Thyroid gland (tissue), 4 donors: ENCODE measurements at regions of chr4 and their contacts with region 1.

Region 1: DNA sequence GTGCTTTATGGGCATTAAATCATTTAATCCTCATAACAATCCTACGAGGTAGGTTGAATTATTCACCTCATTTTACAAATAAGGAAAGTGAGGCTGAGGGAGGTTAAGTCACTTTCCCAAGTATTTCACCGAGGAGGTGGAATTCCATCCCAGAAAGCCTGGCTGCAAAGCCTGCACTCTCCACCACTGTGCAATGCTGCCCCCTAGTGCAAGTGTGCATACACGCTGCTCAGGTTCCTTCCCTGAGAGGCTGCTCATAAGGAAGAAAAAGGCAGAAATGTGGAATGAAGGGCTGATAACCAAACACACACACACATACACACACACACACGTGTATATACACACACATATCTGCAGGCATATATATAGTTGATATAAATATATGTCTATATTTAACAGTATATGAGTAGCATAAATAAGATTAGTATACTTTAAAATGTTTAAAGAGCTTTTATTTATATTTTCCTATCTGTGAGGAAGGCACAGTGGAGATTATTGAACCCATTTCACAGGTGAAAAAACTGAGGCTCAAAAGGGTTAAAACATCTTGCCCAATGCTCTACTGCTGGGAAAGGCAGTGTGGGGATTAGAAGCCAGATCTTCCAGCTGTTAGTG is 714.5 kb upstream of the TENM3 start:
- DNase-seq: peak; percentile 57 to 69
- H3K4me3 ChIP-seq: no peak overlapping the region
- H3K27ac ChIP-seq: no peak overlapping the region
- H3K4me1 ChIP-seq: no peaks in the 10 kb centered on the region
- H3K27me3 ChIP-seq: no peaks in the 10 kb centered on the region
- CTCF ChIP-seq: peak; percentile 37 to 82 (median 70)
- POLR2A ChIP-seq: no peak

Region 2: GRCh38 chr4:181143250-181143854 is 385.3 kb before region 1 on chr4:
- intact Hi-C with region 1: loop called (anchors 5 kb)
- DNase-seq: peak; percentile 75 to 84
- H3K4me3 ChIP-seq: no peak overlapping the region
- H3K27ac ChIP-seq: no peak overlapping the region
- H3K4me1 ChIP-seq: no peaks in the 10 kb centered on the region
- H3K27me3 ChIP-seq: no peaks in the 10 kb centered on the region
- CTCF ChIP-seq: peak; percentile 69 to 88 (median 76)
- POLR2A ChIP-seq: no peak

Region 3: DNA sequence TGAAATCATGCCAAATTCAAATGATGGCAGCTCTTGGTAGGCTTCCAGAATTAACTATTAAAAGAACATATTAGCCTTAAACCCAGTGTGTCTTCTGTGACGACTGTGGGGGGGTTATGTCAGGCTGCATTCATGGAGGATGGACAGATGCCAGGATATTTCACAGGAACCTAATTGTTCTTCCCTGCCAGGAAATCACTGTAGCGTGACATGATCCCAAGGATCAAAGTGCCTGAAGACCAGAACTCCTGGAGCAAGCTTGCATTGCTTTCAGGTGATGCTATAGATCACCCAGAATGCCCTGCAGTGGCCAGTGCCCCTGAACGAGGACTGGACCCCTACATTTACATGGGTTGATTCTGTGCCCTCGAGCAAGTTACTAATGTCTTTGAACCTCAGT is 378.5 kb before region 1 on chr4:
- intact Hi-C with region 1: loop called (anchors 5 kb)
- DNase-seq: no peak
- H3K4me3 ChIP-seq: no peak overlapping the region
- H3K27ac ChIP-seq: no peak overlapping the region
- H3K4me1 ChIP-seq: no peaks in the 10 kb centered on the region
- H3K27me3 ChIP-seq: no peaks in the 10 kb centered on the region
- CTCF ChIP-seq: no peak
- POLR2A ChIP-seq: no peak

Region 4: GRCh38 chr4:181432335-181432734 is 96.3 kb before region 1 on chr4:
- intact Hi-C with region 1: no loop called
- DNase-seq: peak in 1 of 2 donors; percentile 3
- H3K4me3 ChIP-seq: no peak overlapping the region
- H3K27ac ChIP-seq: no peak overlapping the region
- H3K4me1 ChIP-seq: peaks cover 0 to 6% of the 10 kb centered on the region in 2 donors
- H3K27me3 ChIP-seq: no peaks in the 10 kb centered on the region
- CTCF ChIP-seq: no peak
- POLR2A ChIP-seq: no peak